Heart left ventricle (tissue), 16 donors: ENCODE measurements at regions of chr5 and their contacts with region 1.

Region 1: DNA sequence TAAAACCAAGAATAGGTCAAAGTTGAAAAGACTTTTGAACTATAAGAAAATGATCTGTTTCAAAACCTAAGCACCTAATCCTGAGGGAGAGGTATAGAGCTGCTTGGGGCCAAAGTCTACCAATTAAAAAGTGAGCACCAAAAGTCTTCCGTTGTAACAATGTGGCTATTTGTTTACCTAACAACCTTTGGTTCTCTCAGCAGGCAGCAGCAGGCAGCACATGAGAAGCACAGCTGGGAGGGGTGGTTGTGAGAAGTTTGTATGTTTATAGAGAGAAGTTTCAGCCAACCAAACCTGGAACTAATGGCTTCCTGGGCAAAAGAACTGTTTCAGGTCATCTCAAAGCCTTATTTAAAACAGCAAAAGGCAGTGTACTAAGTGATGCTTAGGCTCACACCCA is 59.8 kb upstream of the TBC1D9B start:
- DNase-seq: no peak
- ATAC-seq: no peak
- H3K4me3 ChIP-seq: no peak overlapping the region
- H3K27ac ChIP-seq: no peak overlapping the region
- H3K4me1 ChIP-seq: peaks cover 0 to 23% (median 0%) of the 10 kb centered on the region in 12 donors
- H3K27me3 ChIP-seq: no peaks in the 10 kb centered on the region
- CTCF ChIP-seq: no peak
- POLR2A ChIP-seq: no peak

Region 2: DNA sequence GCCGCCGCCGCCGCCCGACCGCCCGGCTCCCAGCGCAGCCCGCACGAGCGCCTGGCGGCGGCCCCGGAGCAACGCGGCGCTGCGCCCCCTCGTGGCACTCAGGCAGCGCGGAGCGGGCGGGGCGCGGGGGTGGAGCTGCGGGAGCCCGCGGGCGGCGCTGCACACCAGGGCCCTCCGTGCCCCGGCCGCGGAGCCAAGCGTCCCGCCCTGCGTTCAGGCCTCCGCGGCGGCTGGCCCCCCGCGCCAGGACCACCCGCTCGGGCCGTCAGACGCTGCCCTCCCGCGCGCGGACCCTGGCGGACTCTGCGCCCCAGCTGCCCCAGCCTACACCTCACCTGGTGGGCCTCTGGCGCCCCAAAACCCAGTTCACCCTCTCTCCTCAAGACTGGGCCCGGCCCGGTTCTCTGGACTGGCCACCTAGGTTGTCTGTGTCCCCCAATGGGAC is 241.7 kb after region 1 on chr5 and contains the start of gene RASGEF1C:
- intact Hi-C with region 1: no loop called
- DNase-seq: peak in 4 of 5 donors; percentile 50 to 82 (median 59)
- ATAC-seq: peak; percentile 35 to 94 (median 66)
- H3K4me3 ChIP-seq: peak within 1 kb of the TSS in 10 of 12 donors; percentile 16 to 48 (median 40)
- H3K27ac ChIP-seq: peak within 1 kb of the TSS in 1 of 12 donors; percentile 36
- H3K4me1 ChIP-seq: peaks cover 0 to 10% (median 2%) of the 10 kb centered on the region in 12 donors
- H3K27me3 ChIP-seq: peaks cover 5 to 53% (median 24%) of the 10 kb centered on the region in 9 donors
- CTCF ChIP-seq: peak in 8 of 12 donors; percentile 15 to 59 (median 27)
- POLR2A ChIP-seq: no peak
- total RNA-seq, gene RASGEF1C: 0.16 to 0.75 (median 0.23) TPM in 5 of 9 donors, not detected in the others

Region 3: GRCh38 chr5:180915924-180916470 is 948.5 kb after region 1 on chr5:
- intact Hi-C with region 1: loop called in 1 of 10 experiments (anchors 5 kb)
- DNase-seq: no peak
- ATAC-seq: no peak
- H3K4me3 ChIP-seq: no peak overlapping the region
- H3K27ac ChIP-seq: no peak overlapping the region
- H3K4me1 ChIP-seq: no peaks in the 10 kb centered on the region
- H3K27me3 ChIP-seq: peaks cover 0 to 11% (median 0%) of the 10 kb centered on the region in 9 donors
- CTCF ChIP-seq: no peak
- POLR2A ChIP-seq: no peak